Activated CD4-positive, alpha-beta T cell treated with anti-CD3 and anti-CD28 coated beads for 36 hours (primary cell): ENCODE measurements at regions of chr17 and their contacts with region 1.

Region 1: GRCh38 chr17:48363161-48363560 is 66.9 kb downstream of the SKAP1 start:
- DNase-seq: no peak
- ATAC-seq: no peak
- H3K4me3 Mint-ChIP-seq: no peak overlapping the region
- H3K27ac Mint-ChIP-seq: peak overlapping the region; percentile 53
- H3K4me1 Mint-ChIP-seq: peaks cover 20% of the 10 kb centered on the region
- H3K27me3 Mint-ChIP-seq: no peaks in the 10 kb centered on the region

Region 2: GRCh38 chr17:48037036-48037837 is 325.9 kb before region 1 on chr17 and contains the start of gene COPZ2:
- CTCF ChIA-PET with region 1: no interaction called
- POLR2A ChIA-PET with region 1: no interaction called
- intact Hi-C with region 1: no loop called
- DNase-seq: peak; percentile 80
- ATAC-seq: peak; percentile 97
- H3K4me3 Mint-ChIP-seq: peak within 1 kb of the TSS; percentile 72
- H3K27ac Mint-ChIP-seq: peak within 1 kb of the TSS; percentile 72
- H3K4me1 Mint-ChIP-seq: peaks cover 9% of the 10 kb centered on the region
- H3K27me3 Mint-ChIP-seq: peaks cover 33% of the 10 kb centered on the region
- total RNA-seq, gene COPZ2: 3.6 to 4.1 TPM

Region 3: GRCh38 chr17:48351831-48352332 is 11.3 kb before region 1 on chr17:
- CTCF ChIA-PET with region 1: interaction called, 61 read pairs
- POLR2A ChIA-PET with region 1: no interaction called
- intact Hi-C with region 1: no loop called
- DNase-seq: no peak
- ATAC-seq: no peak
- H3K4me3 Mint-ChIP-seq: no peak overlapping the region
- H3K27ac Mint-ChIP-seq: no peak overlapping the region
- H3K4me1 Mint-ChIP-seq: peaks cover 11% of the 10 kb centered on the region
- H3K27me3 Mint-ChIP-seq: no peaks in the 10 kb centered on the region

Region 4: DNA sequence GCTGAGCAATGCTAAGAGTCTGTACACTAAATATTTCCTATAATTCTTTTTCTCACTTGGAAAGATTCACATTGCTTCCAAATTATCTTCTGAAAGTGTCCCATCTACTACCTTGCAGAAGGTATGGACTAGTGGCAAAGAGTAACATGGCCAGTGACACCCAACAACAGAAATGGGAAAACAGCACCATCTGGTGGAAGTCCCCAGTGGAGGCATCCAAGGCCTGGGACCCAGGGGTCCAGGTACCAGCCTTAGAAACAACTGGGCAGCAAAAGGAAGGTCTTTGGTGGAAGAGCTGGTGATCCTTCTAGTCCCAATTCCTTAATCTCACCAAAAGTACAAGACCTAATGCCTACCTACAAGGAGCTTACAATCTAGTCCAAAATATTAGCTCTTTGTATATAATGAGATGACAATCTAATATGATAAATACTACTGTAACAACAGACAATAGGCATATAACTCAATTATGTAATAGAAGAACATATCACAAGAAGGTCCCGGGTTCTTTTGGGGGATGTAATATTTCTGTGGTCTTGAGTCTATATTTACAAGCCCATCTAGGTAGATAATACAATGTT is 11.6 kb after region 1 on chr17:
- CTCF ChIA-PET with region 1: interaction called, 11 read pairs
- POLR2A ChIA-PET with region 1: no interaction called
- intact Hi-C with region 1: no loop called
- DNase-seq: peak; percentile 42
- ATAC-seq: peak; percentile 61
- H3K4me3 Mint-ChIP-seq: no peak overlapping the region
- H3K27ac Mint-ChIP-seq: no peak overlapping the region
- H3K4me1 Mint-ChIP-seq: peaks cover 29% of the 10 kb centered on the region
- H3K27me3 Mint-ChIP-seq: no peaks in the 10 kb centered on the region

Region 5: DNA sequence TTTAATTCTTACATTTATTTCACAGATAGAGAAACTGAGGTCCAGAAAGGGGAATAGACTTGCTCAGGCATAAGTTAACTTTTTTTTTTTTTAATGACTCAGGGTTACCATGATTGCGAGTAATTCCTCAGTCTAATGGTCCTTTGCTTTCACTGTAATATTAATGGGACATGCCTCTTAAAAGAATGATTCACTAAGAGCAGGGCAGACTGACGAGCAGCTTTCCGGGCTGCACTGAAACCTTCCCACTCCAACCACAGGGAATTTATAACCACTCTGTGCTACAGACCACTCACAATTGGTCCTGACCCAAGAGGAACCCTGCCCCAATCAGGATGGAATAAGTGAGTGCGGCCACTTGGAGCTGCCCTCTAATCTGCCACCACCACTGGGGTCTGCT is 176.0 kb after region 1 on chr17:
- CTCF ChIA-PET with region 1: no interaction called
- POLR2A ChIA-PET with region 1: no interaction called
- intact Hi-C with region 1: no loop called
- DNase-seq: no peak
- ATAC-seq: no peak
- H3K4me3 Mint-ChIP-seq: no peak overlapping the region
- H3K27ac Mint-ChIP-seq: no peak overlapping the region
- H3K4me1 Mint-ChIP-seq: peaks cover 21% of the 10 kb centered on the region
- H3K27me3 Mint-ChIP-seq: peaks cover 39% of the 10 kb centered on the region